Mammary epithelial cell (primary cell): ENCODE measurements at regions of chr14 and their contacts with region 1.

Region 1: DNA sequence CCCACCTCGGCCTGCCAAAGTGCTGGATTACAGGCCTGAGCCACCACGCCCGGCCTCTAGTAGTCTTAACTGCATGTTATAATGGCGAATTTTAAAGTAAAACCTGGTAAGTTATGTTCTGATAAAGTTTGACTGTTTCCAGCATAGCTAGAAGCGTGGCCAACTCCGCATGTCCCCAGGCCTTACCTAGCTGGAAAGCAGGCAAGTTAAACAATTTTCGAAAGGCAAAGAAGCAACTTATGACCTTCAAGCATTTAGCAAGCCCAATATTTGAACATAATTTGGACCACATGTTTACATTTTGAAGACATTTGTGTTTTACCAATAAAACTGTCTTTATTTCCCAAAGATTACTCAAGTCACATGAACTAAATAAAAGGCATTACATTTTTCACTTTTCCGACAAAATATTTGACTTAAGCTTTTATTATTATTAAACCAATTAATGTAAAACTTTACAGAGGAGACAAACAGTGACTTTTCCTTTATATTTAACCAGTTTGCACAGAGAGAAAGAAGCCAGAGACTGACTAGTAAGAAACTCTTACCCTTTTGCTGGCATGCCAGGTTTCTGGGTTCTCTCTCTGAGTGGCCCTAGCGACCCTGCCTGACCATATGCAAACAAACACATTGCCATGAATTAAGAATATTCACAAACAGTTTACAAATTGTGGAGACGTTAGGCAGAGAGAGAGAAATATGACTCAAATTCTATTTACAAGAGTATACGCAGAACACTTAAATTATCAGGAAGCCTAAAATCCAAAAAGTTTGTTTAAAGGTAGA is 106.3 kb downstream of the RIN3 start:
- DNase-seq: no peak
- H3K4me3 ChIP-seq: no peak overlapping the region
- H3K27ac ChIP-seq: no peak overlapping the region
- H3K4me1 ChIP-seq: peaks cover 3% of the 10 kb centered on the region
- H3K27me3 ChIP-seq: no peaks in the 10 kb centered on the region
- CTCF ChIP-seq: no peak

Region 2: GRCh38 chr14:92704036-92704804 is 84.4 kb after region 1 on chr14:
- CTCF ChIA-PET with region 1: no interaction called
- dilution Hi-C with region 1: loop called (anchors 5 kb)
- in situ Hi-C with region 1: no loop called
- intact Hi-C with region 1: no loop called
- DNase-seq: no peak
- H3K4me3 ChIP-seq: no peak overlapping the region
- H3K27ac ChIP-seq: no peak overlapping the region
- H3K4me1 ChIP-seq: peaks cover 6% of the 10 kb centered on the region
- H3K27me3 ChIP-seq: no peaks in the 10 kb centered on the region
- CTCF ChIP-seq: no peak

Region 3: GRCh38 chr14:92719890-92720323 is 100.0 kb after region 1 on chr14:
- CTCF ChIA-PET with region 1: no interaction called
- dilution Hi-C with region 1: no loop called
- in situ Hi-C with region 1: no loop called
- intact Hi-C with region 1: no loop called
- DNase-seq: no peak
- H3K4me3 ChIP-seq: no peak overlapping the region
- H3K27ac ChIP-seq: no peak overlapping the region
- H3K4me1 ChIP-seq: no peaks in the 10 kb centered on the region
- H3K27me3 ChIP-seq: no peaks in the 10 kb centered on the region
- CTCF ChIP-seq: no peak

Region 4: DNA sequence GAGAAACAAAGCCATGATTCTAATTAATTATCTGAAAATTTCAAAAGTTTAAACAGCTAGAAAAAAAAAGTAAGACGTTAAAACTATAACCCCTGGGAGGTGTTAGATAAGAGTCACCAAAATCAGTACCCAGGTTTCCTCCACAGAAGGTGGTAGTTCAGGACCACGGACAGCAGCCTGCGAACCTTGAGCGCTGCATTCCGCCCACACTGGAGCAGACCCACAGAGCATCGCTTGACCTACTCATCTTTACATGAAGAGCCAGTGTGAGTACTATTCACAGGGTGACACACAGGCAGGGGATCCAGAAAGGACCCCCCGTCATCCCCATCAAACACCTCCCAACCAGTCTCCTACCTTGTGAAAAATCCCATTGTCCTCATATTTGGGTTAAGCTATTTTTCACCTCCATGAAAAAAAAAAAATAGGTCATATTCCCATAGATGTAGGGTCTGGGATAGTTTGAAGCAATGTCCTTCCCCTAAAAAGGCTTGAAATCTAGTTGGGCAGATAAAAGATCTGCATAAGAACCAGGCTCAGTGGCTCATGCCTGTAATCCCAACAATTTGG is 294.3 kb after region 1 on chr14:
- CTCF ChIA-PET with region 1: no interaction called
- dilution Hi-C with region 1: no loop called
- in situ Hi-C with region 1: no loop called
- intact Hi-C with region 1: no loop called
- DNase-seq: peak; percentile 29
- H3K4me3 ChIP-seq: no peak overlapping the region
- H3K27ac ChIP-seq: no peak overlapping the region
- H3K4me1 ChIP-seq: no peaks in the 10 kb centered on the region
- H3K27me3 ChIP-seq: no peaks in the 10 kb centered on the region
- CTCF ChIP-seq: no peak